ENCODE measurements at regions of chr13 and their contacts with region 1.

Region 1: GRCh38 chr13:77084755-77085154 is 57.8 kb upstream of the FBXL3 start:
- DNase-seq: no peak
- H3K4me3 ChIP-seq: no peak overlapping the region
- H3K27ac ChIP-seq: no peak overlapping the region
- H3K4me1 ChIP-seq: no peaks in the 10 kb centered on the region
- H3K27me3 ChIP-seq: no peaks in the 10 kb centered on the region
- CTCF ChIP-seq: no peak
- POLR2A ChIP-seq: no peak

Region 2: DNA sequence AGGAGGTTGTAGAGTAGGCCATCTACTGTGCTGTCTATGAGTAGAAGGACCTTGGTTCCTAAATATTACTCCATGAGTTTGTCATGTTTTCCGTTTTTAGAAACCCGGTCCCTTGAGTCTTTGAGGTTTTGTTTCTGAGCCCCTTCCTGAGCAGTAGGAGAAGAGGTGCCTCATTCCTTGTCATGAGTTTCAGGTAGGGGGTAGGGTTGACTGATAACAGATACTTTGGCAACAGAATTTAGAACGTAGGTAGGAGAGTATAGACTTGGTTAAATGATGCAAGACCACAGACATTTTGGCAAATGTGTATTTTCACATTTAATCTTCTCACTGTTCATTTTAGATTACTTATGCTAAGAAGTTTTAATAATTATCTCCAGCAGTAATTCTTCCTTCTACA is 1424.1 kb before region 1 on chr13:
- intact Hi-C with region 1: loop called (anchors 5 kb)
- DNase-seq: no peak
- H3K4me3 ChIP-seq: no peak overlapping the region
- H3K27ac ChIP-seq: no peak overlapping the region
- H3K4me1 ChIP-seq: no peaks in the 10 kb centered on the region
- H3K27me3 ChIP-seq: no peaks in the 10 kb centered on the region
- CTCF ChIP-seq: no peak
- POLR2A ChIP-seq: no peak

Region 3: GRCh38 chr13:76473552-76474134 is 611.1 kb before region 1 on chr13:
- intact Hi-C with region 1: no loop called
- DNase-seq: peak; percentile 48 to 52
- H3K4me3 ChIP-seq: no peak overlapping the region
- H3K27ac ChIP-seq: no peak overlapping the region
- H3K4me1 ChIP-seq: no peaks in the 10 kb centered on the region
- H3K27me3 ChIP-seq: no peaks in the 10 kb centered on the region
- CTCF ChIP-seq: peak; percentile 88 to 94 (median 92)
- POLR2A ChIP-seq: no peak

Region 4: GRCh38 chr13:77660841-77661250 is 576.1 kb after region 1 on chr13:
- intact Hi-C with region 1: no loop called
- DNase-seq: no peak
- H3K4me3 ChIP-seq: no peak overlapping the region
- H3K27ac ChIP-seq: no peak overlapping the region
- H3K4me1 ChIP-seq: no peaks in the 10 kb centered on the region
- H3K27me3 ChIP-seq: no peaks in the 10 kb centered on the region
- CTCF ChIP-seq: no peak
- POLR2A ChIP-seq: no peak

Measured in breast epithelium (tissue), 4 donors.